ENCODE measurements at regions of chr1 and their contacts with region 1.

Region 1: DNA sequence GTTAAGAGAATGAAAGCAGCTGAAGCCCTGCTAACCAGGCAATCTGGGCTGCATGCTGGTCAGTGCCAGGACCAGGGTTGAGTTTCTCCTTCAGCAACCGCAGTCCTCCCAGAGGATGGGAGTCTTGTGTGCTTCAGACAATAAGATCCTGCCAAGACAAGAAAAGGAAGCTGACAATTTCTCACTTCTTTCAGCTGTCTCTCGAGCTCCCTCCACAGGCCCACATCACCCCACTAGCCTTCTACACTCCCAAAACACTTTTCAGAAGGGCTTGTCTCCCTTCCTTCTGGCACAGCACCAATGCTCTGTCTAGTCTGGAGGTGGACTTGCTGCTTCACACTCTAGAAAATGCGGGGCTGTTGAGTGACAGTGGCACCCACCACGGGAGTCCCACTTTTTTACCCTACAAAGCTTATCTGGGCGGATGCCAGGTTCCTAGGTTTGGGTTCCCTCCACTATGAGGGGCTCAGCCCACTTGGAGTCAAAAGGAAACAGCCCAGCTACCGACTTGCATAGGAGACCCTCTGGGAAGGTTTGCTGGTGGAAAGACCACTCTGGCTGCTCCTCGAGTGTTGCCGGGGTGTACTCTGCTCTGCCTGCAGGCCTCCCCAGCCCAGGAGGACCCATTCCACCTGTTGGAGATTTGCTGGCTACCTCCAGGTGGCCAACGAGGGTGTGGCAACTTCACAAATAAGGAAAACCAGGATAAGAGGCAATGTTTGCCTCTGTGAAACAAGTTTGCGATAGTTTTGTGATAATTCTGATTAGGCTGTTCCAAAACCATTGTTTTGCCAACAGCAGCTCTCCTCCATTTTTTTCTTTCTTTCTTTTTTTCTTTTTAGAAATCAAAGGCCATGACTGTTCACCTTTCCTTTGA is 68.9 kb downstream of the TENT5C start:
- DNase-seq: peak; percentile 74
- ATAC-seq: peak; percentile 84
- H3K4me3 Mint-ChIP-seq: no peak overlapping the region
- H3K27ac Mint-ChIP-seq: no peak overlapping the region
- H3K4me1 Mint-ChIP-seq: peaks cover 20% of the 10 kb centered on the region
- H3K27me3 Mint-ChIP-seq: peaks cover 22% of the 10 kb centered on the region

Region 2: GRCh38 chr1:117512743-117513321 is 161.9 kb before region 1 on chr1:
- CTCF ChIA-PET with region 1: interaction called, 23 read pairs
- POLR2A ChIA-PET with region 1: no interaction called
- DNase-seq: no peak
- ATAC-seq: peak; percentile 27
- H3K4me3 Mint-ChIP-seq: no peak overlapping the region
- H3K27ac Mint-ChIP-seq: no peak overlapping the region
- H3K4me1 Mint-ChIP-seq: no peaks in the 10 kb centered on the region
- H3K27me3 Mint-ChIP-seq: no peaks in the 10 kb centered on the region

Region 3: DNA sequence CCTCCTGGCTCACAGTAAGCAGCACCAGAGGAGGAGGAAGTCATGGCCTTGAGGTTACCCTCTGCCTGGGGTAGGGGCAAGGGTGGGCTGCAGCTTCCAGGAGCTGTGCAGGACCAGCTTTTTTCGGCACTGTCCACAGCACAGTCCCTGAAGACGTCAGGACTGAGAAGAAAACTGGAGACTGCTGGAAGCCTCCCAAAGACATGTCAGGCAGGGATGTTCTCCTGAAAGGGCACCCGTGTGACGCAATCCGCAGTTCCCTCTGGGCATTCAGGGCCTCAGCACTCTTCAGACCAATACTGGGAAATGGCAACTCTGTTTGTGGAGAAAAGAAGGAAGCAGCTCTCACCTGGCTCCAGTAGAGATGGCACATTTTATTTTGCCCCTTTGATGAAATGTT is 133.8 kb before region 1 on chr1:
- CTCF ChIA-PET with region 1: interaction called, 159 read pairs
- POLR2A ChIA-PET with region 1: interaction called, 3 read pairs
- DNase-seq: no peak
- ATAC-seq: no peak
- H3K4me3 Mint-ChIP-seq: no peak overlapping the region
- H3K27ac Mint-ChIP-seq: no peak overlapping the region
- H3K4me1 Mint-ChIP-seq: peaks cover 15% of the 10 kb centered on the region
- H3K27me3 Mint-ChIP-seq: peaks cover 6% of the 10 kb centered on the region

Region 4: GRCh38 chr1:117605774-117606648 is 68.7 kb before region 1 on chr1 and contains the start of gene TENT5C:
- CTCF ChIA-PET with region 1: interaction called, 41 read pairs
- POLR2A ChIA-PET with region 1: interaction called, 3 read pairs
- DNase-seq: peak; percentile 99
- ATAC-seq: peak; percentile 83
- H3K4me3 Mint-ChIP-seq: peak within 1 kb of the TSS; percentile 97
- H3K27ac Mint-ChIP-seq: peak within 1 kb of the TSS; percentile 94
- H3K4me1 Mint-ChIP-seq: peaks cover 49% of the 10 kb centered on the region
- H3K27me3 Mint-ChIP-seq: peaks cover 13% of the 10 kb centered on the region
- total RNA-seq, gene TENT5C: 20.7 to 20.8 TPM

Region 5: DNA sequence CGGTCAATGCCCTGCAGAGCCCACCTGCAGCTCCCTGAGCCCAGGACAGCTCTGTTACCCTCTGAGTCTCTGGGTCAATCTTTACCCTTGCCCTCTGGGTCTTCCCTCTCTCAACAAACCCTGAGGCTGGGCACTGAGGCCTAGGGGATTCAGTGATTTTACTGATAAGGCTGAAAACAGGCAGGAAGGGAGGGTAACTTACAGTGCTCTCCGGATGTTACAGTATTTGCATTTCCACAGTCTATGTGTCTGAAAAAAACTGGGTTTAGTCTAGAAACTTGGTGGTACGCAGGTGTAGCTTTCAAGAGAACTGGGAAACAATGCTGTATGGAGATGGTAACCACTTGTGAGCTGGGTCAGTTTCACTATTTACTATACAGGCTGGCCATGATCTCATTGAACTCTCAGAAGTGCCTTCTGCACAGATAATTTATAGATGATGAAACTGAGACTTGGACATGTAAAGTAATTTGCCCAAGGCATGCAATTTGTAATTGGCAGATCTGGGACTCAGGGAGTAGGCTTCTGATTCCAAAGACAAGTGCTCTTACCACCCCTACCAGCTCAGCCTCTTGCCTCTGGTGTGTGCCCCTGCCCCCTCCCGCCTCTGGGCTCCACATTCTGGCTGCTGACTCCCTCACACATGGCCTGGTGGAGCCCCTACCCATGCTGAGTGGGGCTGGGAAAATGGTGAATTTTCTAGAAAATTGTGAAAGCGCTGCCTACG is 20.1 kb before region 1 on chr1:
- CTCF ChIA-PET with region 1: interaction called, 46 read pairs
- POLR2A ChIA-PET with region 1: interaction called, 4 read pairs
- DNase-seq: no peak
- ATAC-seq: peak; percentile 7
- H3K4me3 Mint-ChIP-seq: peak overlapping the region; percentile 25
- H3K27ac Mint-ChIP-seq: peak overlapping the region; percentile 86
- H3K4me1 Mint-ChIP-seq: peaks cover 76% of the 10 kb centered on the region
- H3K27me3 Mint-ChIP-seq: peaks cover 22% of the 10 kb centered on the region

Region 6: DNA sequence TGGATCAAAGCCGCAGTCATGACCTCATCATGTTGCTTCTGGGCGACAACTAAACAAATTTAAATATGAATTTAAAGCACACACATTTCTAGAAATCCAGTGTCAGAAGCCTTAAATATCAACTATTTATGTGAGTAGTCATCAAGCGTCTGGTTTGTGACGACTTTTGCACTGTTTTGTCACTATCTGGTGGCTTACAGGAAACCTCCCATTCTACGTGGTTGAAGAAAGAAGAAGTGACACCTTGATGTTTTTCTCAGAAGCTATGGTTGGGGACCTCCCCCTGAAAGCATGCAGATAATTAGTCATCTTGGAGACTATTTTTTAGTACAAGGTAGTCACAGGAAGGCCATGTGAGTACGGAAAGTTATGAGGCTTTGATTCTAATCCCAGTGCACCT is 10.4 kb before region 1 on chr1:
- CTCF ChIA-PET with region 1: interaction called, 46 read pairs
- POLR2A ChIA-PET with region 1: interaction called, 5 read pairs
- DNase-seq: peak; percentile 86
- ATAC-seq: peak; percentile 73
- H3K4me3 Mint-ChIP-seq: peak overlapping the region; percentile 36
- H3K27ac Mint-ChIP-seq: peak overlapping the region; percentile 84
- H3K4me1 Mint-ChIP-seq: peaks cover 84% of the 10 kb centered on the region
- H3K27me3 Mint-ChIP-seq: peaks cover 3% of the 10 kb centered on the region

Region 7: DNA sequence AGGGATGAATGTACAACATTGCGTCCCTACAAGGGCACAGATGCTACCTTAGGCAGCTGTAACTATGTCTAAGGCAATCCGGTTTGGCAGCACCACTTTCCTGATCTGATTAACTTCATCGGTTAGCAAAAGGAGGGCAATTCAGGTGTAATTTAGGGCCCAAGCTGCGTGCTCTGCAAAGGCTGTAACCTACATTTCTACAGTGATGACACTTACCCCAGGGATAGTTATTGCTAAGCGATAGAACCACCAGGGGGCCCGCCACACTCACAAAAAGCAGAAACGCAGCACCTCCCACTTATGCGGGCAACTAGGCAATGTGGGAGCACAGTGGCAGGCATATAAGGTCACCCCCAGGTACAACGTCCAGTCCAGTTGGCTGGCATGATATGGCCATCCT is 141.2 kb after region 1 on chr1:
- CTCF ChIA-PET with region 1: no interaction called
- POLR2A ChIA-PET with region 1: no interaction called
- DNase-seq: no peak
- ATAC-seq: no peak
- H3K4me3 Mint-ChIP-seq: no peak overlapping the region
- H3K27ac Mint-ChIP-seq: no peak overlapping the region
- H3K4me1 Mint-ChIP-seq: no peaks in the 10 kb centered on the region
- H3K27me3 Mint-ChIP-seq: no peaks in the 10 kb centered on the region

Measured in activated CD8-positive, alpha-beta T cell treated with anti-CD3 and anti-CD28 coated beads, Interleukin-2, amount 10 ng/mL, durations not matched to agents 7 days and 5 days (primary cell).